Activated CD8-positive, alpha-beta T cell treated with anti-CD3 and anti-CD28 coated beads for 36 hours (primary cell): ENCODE measurements at regions of chr12 and their contacts with region 1.

Region 1: GRCh38 chr12:52278541-52279421 is 4.3 kb downstream of the KRT86 start:
- DNase-seq: peak; percentile 78
- ATAC-seq: peak; percentile 100
- H3K4me3 Mint-ChIP-seq: no peak overlapping the region
- H3K27ac Mint-ChIP-seq: no peak overlapping the region
- H3K4me1 Mint-ChIP-seq: peaks cover 2% of the 10 kb centered on the region
- H3K27me3 Mint-ChIP-seq: peaks cover 28% of the 10 kb centered on the region
- CTCF ChIP-seq: peak; percentile 94

Region 2: DNA sequence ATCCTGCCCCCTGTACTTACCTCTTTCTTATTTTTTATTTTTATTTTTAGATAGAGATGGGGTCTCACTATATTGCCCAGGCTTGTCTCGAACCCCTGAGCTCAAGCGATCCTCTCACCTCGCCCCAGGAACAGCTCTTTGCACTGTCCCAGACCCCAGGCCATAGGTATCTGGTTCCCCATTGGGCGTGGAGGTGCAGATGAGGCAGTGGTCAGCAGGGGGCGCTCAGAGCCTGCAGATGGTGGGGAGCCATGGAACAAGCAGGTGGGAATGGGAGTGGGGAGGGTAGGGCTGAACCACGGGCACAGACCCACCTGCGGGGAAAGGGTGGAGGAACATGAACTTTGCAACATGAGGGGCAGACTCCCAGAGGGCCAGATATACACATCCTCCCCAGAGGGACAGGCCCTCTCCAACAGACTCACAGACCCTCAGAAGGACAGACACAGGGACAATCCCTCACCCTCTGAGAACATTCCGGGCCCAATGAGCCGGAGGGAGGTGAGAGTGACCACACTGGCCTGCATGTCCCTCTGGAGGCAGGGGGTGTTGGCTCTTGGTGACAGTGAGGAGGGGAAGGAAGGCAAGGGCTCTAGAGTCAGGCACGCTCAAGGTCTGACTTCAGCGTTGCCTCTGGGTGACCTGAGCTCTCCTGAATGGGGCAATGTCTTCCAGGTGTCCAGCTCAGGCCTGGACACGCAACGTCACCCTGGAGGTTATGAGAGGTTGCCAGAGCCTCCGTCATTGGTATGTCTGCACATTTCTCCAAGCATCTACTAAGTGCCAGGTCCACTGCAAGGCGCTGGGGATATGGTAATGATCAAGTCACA is 121.8 kb before region 1 on chr12:
- CTCF ChIA-PET with region 1: interaction called, 10 read pairs
- POLR2A ChIA-PET with region 1: no interaction called
- intact Hi-C with region 1: no loop called
- DNase-seq: peak; percentile 81
- ATAC-seq: peak; percentile 64
- H3K4me3 Mint-ChIP-seq: no peak overlapping the region
- H3K27ac Mint-ChIP-seq: no peak overlapping the region
- H3K4me1 Mint-ChIP-seq: peaks cover 17% of the 10 kb centered on the region
- H3K27me3 Mint-ChIP-seq: no peaks in the 10 kb centered on the region
- CTCF ChIP-seq: peak; percentile 97

Region 3: DNA sequence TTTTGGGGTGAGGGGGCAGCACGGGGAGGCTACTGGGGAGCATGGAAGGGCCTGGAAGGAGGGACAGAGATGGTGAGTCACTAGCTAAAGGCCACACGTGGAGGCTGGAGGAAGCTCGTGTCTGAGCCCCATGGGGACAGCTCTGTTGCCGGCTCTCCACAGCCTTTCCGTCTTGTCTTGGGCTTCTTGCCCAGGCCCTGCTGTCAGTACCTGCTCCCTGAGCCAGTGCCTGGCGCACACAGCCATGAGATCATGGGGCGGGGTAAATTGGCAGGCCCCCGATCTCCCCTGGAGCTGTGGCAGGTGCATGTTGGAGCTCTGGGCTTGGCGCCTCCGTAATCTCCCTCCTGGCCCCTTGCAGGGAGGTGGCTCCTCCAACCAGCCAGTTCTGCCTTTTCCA is 70.9 kb before region 1 on chr12:
- CTCF ChIA-PET with region 1: interaction called, 15 read pairs
- POLR2A ChIA-PET with region 1: no interaction called
- intact Hi-C with region 1: no loop called
- DNase-seq: no peak
- ATAC-seq: no peak
- H3K4me3 Mint-ChIP-seq: no peak overlapping the region
- H3K27ac Mint-ChIP-seq: no peak overlapping the region
- H3K4me1 Mint-ChIP-seq: peaks cover 3% of the 10 kb centered on the region
- H3K27me3 Mint-ChIP-seq: peaks cover 4% of the 10 kb centered on the region
- CTCF ChIP-seq: no peak

Region 4: DNA sequence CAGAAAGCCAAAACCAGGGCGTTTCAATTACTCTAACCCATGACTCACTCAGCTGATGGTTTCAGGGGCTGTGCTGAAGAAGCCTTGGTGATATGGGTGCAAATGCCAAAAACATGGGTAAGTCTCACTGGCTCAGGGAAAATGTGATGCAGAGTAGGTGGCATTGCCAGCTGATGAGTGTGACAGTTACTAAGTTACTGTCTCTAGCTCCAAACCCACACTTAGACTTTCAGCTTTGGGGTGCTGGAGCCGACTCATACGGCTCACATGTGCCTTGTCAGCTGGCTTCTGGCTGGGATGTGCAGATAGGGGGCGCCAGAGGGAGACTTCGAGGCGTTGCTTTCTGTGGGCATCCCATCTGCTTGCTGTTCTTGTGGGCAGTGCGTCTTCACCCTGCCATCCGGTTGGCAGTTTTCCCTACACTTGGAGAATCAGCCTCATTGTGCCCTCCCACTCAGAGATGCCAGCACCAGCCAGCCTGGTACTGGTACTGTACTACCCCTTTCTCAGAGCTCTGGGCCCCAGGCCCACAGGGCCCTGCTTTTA is 56.8 kb before region 1 on chr12:
- CTCF ChIA-PET with region 1: interaction called, 27 read pairs
- POLR2A ChIA-PET with region 1: no interaction called
- intact Hi-C with region 1: no loop called
- DNase-seq: peak; percentile 92
- ATAC-seq: peak; percentile 95
- H3K4me3 Mint-ChIP-seq: no peak overlapping the region
- H3K27ac Mint-ChIP-seq: no peak overlapping the region
- H3K4me1 Mint-ChIP-seq: peaks cover 15% of the 10 kb centered on the region
- H3K27me3 Mint-ChIP-seq: peaks cover 30% of the 10 kb centered on the region
- CTCF ChIP-seq: peak; percentile 63

Region 5: GRCh38 chr12:52258335-52258901 is 20.4 kb before region 1 on chr12:
- CTCF ChIA-PET with region 1: interaction called, 69 read pairs
- POLR2A ChIA-PET with region 1: no interaction called
- intact Hi-C with region 1: no loop called
- DNase-seq: no peak
- ATAC-seq: no peak
- H3K4me3 Mint-ChIP-seq: no peak overlapping the region
- H3K27ac Mint-ChIP-seq: no peak overlapping the region
- H3K4me1 Mint-ChIP-seq: peaks cover 7% of the 10 kb centered on the region
- H3K27me3 Mint-ChIP-seq: peaks cover 58% of the 10 kb centered on the region
- CTCF ChIP-seq: no peak

Region 6: GRCh38 chr12:52295663-52296062 is 16.9 kb after region 1 on chr12:
- CTCF ChIA-PET with region 1: interaction called, 32 read pairs
- POLR2A ChIA-PET with region 1: no interaction called
- intact Hi-C with region 1: no loop called
- DNase-seq: no peak
- ATAC-seq: no peak
- H3K4me3 Mint-ChIP-seq: no peak overlapping the region
- H3K27ac Mint-ChIP-seq: no peak overlapping the region
- H3K4me1 Mint-ChIP-seq: no peaks in the 10 kb centered on the region
- H3K27me3 Mint-ChIP-seq: peaks cover 21% of the 10 kb centered on the region
- CTCF ChIP-seq: no peak

Region 7: DNA sequence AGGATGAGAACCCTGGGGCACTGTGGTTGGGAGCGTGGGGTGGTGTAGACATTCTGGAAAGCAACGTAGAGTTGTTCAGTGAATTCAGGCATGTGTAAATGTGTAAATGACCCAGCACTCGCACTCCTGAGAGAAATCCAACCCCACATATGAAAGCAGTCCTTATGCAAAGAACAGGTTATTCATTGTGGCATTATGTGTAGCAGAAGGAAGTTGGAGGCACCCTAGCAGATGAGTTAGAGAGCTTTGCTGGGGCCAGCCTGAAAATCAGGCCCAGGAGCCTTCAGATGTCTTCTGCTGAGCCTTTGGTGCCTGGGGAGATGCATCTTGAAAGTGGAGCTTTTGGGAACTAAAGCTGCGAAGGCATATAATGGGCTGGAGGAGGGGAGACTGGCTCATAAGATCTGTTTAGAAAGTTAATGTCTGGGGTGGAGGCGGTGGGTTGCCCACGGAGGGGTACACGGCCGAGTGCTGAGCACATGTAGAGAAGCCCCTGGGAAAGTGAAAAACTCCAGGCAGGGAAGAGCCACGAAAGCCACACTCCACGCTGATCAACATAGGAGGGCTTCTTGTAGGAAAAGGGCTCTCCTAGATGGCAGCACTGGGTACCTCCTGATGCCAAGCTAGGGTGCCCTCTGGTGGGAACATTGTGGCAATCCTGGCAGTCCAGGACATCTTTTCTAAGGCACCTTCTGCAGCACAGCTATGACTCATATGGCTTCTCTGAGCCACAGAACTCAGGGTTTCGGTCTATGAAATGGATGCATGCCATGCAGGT is 48.5 kb after region 1 on chr12:
- CTCF ChIA-PET with region 1: interaction called, 39 read pairs
- POLR2A ChIA-PET with region 1: no interaction called
- intact Hi-C with region 1: no loop called
- DNase-seq: peak; percentile 87
- ATAC-seq: peak; percentile 98
- H3K4me3 Mint-ChIP-seq: no peak overlapping the region
- H3K27ac Mint-ChIP-seq: no peak overlapping the region
- H3K4me1 Mint-ChIP-seq: peaks cover 12% of the 10 kb centered on the region
- H3K27me3 Mint-ChIP-seq: peaks cover 6% of the 10 kb centered on the region
- CTCF ChIP-seq: peak; percentile 53